PC-9 (cell line): ENCODE measurements at regions of chr1 and their contacts with region 1.

Region 1: GRCh38 chr1:36088575-36089443 is at the start of gene ADPRS:
- DNase-seq: peak; percentile 74 to 89
- H3K4me3 ChIP-seq: peak within 1 kb of the TSS; percentile 97
- H3K27ac ChIP-seq: peak within 1 kb of the TSS; percentile 57
- H3K4me1 ChIP-seq: peaks cover 6% of the 10 kb centered on the region
- H3K27me3 ChIP-seq: no peaks in the 10 kb centered on the region
- CTCF ChIP-seq: peak; percentile 93
- total RNA-seq, gene ADPRS: 30.0 and 43.1 TPM in 2 replicates

Region 2: DNA sequence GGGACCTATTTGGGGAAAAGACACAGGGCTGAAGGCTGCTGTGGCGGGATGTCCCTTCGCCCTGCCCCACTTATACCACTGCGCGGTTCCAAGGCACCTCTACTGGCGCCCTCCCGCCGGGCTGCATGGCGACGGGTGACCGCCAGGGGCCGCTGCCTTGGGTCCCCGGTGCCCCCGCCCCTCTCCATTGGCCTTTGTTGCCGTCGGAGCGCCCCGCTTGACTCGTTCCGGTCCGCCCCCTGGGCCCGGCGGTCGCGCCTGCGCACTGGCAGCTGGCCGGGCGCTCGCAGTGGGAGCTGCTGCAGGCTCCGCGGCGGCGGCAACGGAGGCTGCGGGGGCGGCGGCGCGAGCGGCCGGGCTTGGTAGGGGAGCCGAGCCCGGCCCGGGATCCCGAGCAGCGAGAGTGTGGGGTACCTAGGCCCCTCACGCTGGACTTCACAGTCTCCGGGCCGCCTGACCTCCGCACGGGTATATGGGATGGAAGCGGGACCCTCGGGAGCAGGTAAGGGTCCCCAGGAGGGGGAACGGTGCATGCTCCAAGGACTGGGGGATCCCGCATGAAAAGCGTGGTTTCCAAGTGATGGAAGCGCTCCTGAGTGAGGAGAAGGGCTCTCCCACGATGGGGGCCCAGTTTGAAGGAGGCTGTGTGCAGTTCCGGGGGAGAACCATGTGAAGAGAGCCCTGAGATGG is 205.7 kb before region 1 on chr1 and contains the start of gene AGO1:
- CTCF ChIA-PET with region 1: no interaction called
- POLR2A ChIA-PET with region 1: no interaction called
- intact Hi-C with region 1: loop called (anchors 1 kb)
- DNase-seq: peak; percentile 74 to 98
- H3K4me3 ChIP-seq: peak within 1 kb of the TSS; percentile 100
- H3K27ac ChIP-seq: no peak within 1 kb of the TSS
- H3K4me1 ChIP-seq: peaks cover 7% of the 10 kb centered on the region
- H3K27me3 ChIP-seq: no peaks in the 10 kb centered on the region
- CTCF ChIP-seq: peak; percentile 81
- total RNA-seq, gene AGO1: 47.9 and 66.0 TPM in 2 replicates

Region 3: DNA sequence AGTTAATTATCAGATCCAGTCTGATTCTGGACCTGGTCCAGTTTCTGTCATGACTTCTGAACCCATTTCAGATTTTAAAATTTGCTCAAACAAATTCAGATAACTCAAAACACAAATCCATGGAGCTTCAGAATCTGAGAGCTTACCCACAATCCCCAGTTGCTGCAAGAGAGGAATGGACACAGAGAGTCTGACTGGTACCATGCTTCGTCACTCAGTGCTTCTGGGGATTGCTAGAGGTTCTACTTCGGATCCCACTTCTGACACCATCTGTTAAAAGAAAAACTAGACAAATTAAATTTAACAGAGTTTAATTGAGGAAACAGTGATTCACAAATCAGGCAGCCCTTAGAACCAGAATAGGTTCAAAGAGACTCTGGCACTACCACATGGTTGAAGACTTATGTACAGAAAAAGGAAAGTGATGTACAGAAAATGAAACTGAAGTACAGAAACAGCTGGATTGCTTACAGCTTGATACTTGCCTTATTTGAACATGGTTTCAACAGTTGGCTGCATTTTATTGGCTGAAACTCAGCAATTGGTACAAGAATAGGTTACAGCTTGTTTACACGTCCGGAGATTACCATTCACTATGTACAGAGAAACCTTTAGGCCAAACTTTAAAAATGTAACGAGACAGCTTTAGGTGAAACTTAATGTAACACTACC is 65.6 kb before region 1 on chr1:
- CTCF ChIA-PET with region 1: no interaction called
- POLR2A ChIA-PET with region 1: no interaction called
- intact Hi-C with region 1: no loop called
- DNase-seq: no peak
- H3K4me3 ChIP-seq: no peak overlapping the region
- H3K27ac ChIP-seq: no peak overlapping the region
- H3K4me1 ChIP-seq: peaks cover 26% of the 10 kb centered on the region
- H3K27me3 ChIP-seq: no peaks in the 10 kb centered on the region
- CTCF ChIP-seq: no peak

Region 4: GRCh38 chr1:36055706-36056105 is 33.1 kb before region 1 on chr1:
- CTCF ChIA-PET with region 1: interaction called, 16 read pairs
- POLR2A ChIA-PET with region 1: no interaction called
- intact Hi-C with region 1: no loop called
- DNase-seq: no peak
- H3K4me3 ChIP-seq: no peak overlapping the region
- H3K27ac ChIP-seq: no peak overlapping the region
- H3K4me1 ChIP-seq: no peaks in the 10 kb centered on the region
- H3K27me3 ChIP-seq: no peaks in the 10 kb centered on the region
- CTCF ChIP-seq: no peak